Activated B cell treated with CpG ODN at 0.5 μM for 24 hours (primary cell): ENCODE measurements at regions of chr20 and their contacts with region 1.

Region 1: GRCh38 chr20:20360464-20360863 is 7.4 kb upstream of the INSM1 start:
- DNase-seq: no peak
- ATAC-seq: peak; percentile 79
- H3K4me3 Mint-ChIP-seq: no peak overlapping the region
- H3K27ac Mint-ChIP-seq: no peak overlapping the region
- H3K4me1 Mint-ChIP-seq: peaks cover 30% of the 10 kb centered on the region
- H3K27me3 Mint-ChIP-seq: peaks cover 42% of the 10 kb centered on the region
- CTCF ChIP-seq: peak; percentile 50

Region 2: GRCh38 chr20:20452254-20452676 is 91.8 kb after region 1 on chr20:
- CTCF ChIA-PET with region 1: interaction called, 3 read pairs
- POLR2A ChIA-PET with region 1: no interaction called
- intact Hi-C with region 1: loop called (anchors 2 kb)
- DNase-seq: peak; percentile 60
- ATAC-seq: peak; percentile 99
- H3K4me3 Mint-ChIP-seq: peak overlapping the region; percentile 84
- H3K27ac Mint-ChIP-seq: peak overlapping the region; percentile 86
- H3K4me1 Mint-ChIP-seq: peaks cover 19% of the 10 kb centered on the region
- H3K27me3 Mint-ChIP-seq: no peaks in the 10 kb centered on the region
- CTCF ChIP-seq: no peak

Region 3: DNA sequence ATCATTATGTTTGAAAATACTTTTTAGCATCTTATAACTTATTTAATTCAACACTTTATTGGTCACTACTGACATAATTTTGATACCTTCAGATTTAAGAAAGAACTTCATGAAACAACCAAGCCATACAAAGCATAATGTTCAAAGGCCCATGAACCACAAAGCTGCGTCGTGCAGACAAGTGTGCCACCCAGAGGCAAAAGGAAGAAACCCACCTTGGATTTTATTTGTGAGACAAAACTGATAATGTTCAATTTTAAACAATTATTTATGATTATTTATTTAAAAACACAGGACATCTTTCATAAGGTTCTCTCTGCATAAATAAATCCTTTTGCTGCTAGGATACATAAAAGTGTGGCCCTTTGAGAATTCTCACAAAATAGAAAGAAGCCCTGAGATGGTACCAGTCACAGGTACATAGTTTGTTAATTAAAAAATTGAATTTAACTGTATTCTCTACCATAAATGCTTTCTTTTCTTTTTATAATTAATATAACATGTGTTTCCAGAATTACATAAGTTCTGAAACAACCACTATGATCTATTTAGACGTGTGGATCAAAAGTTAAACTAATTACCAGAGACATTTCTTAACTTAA is 208.2 kb after region 1 on chr20:
- CTCF ChIA-PET with region 1: interaction called, 6 read pairs
- POLR2A ChIA-PET with region 1: no interaction called
- intact Hi-C with region 1: loop called (anchors 1 kb)
- DNase-seq: no peak
- ATAC-seq: peak; percentile 34
- H3K4me3 Mint-ChIP-seq: no peak overlapping the region
- H3K27ac Mint-ChIP-seq: no peak overlapping the region
- H3K4me1 Mint-ChIP-seq: peaks cover 2% of the 10 kb centered on the region
- H3K27me3 Mint-ChIP-seq: no peaks in the 10 kb centered on the region
- CTCF ChIP-seq: no peak

Region 4: GRCh38 chr20:20593447-20594170 is 233.1 kb after region 1 on chr20:
- CTCF ChIA-PET with region 1: interaction called, 4 read pairs
- POLR2A ChIA-PET with region 1: no interaction called
- intact Hi-C with region 1: loop called (anchors 1 kb)
- DNase-seq: no peak
- ATAC-seq: no peak
- H3K4me3 Mint-ChIP-seq: no peak overlapping the region
- H3K27ac Mint-ChIP-seq: no peak overlapping the region
- H3K4me1 Mint-ChIP-seq: no peaks in the 10 kb centered on the region
- H3K27me3 Mint-ChIP-seq: no peaks in the 10 kb centered on the region
- CTCF ChIP-seq: no peak

Region 5: GRCh38 chr20:21099751-21100577 is 739.5 kb after region 1 on chr20:
- CTCF ChIA-PET with region 1: no interaction called
- POLR2A ChIA-PET with region 1: no interaction called
- intact Hi-C with region 1: loop called (anchors 2 kb)
- DNase-seq: peak; percentile 42
- ATAC-seq: peak; percentile 57
- H3K4me3 Mint-ChIP-seq: peak overlapping the region; percentile 88
- H3K27ac Mint-ChIP-seq: peak overlapping the region; percentile 83
- H3K4me1 Mint-ChIP-seq: peaks cover 36% of the 10 kb centered on the region
- H3K27me3 Mint-ChIP-seq: peaks cover 72% of the 10 kb centered on the region
- CTCF ChIP-seq: no peak